ENCODE measurements at regions of chr3 and their contacts with region 1.

Region 1: DNA sequence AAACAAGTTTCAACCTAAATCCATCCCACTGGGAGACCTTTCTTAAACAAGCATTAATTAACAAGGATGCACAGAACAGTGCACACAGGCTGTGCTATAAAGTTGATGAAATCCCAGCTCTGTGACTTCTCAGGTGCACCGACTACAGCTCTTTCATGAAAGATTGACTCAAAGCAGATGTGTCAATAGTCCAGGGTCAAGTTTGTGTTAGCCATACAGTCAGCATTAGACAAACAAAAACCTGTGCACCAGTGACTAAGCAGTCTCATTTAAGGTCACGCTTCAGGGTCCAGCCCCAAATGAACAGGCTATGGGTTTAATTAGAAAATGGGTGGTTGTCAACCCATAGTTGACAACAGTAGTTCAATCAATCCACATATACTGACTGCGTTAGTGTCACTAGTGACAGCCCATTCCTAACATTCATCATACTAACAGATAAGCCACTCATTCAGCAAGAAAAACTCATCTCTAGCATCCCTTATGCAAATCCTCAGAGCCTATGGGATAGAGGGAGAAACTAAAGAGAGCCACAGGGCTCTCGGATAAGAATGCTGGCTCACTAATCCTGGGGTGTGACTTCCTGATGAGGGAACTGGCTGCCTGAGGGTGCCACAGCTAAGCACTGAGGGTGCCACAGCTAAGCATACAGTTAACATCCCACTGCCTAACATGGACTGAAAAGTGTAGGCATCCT is 84.1 kb downstream of the WNT5A start:
- DNase-seq: peak; percentile 83
- ATAC-seq: peak; percentile 91
- H3K4me3 ChIP-seq: peak overlapping the region; percentile 10; the same call in 1 of the 2 replicates
- H3K27ac ChIP-seq: peak overlapping the region; percentile 65
- H3K4me1 ChIP-seq: peaks cover 40% of the 10 kb centered on the region
- H3K27me3 ChIP-seq: no peaks in the 10 kb centered on the region
- CTCF ChIP-seq: no peak

Region 2: DNA sequence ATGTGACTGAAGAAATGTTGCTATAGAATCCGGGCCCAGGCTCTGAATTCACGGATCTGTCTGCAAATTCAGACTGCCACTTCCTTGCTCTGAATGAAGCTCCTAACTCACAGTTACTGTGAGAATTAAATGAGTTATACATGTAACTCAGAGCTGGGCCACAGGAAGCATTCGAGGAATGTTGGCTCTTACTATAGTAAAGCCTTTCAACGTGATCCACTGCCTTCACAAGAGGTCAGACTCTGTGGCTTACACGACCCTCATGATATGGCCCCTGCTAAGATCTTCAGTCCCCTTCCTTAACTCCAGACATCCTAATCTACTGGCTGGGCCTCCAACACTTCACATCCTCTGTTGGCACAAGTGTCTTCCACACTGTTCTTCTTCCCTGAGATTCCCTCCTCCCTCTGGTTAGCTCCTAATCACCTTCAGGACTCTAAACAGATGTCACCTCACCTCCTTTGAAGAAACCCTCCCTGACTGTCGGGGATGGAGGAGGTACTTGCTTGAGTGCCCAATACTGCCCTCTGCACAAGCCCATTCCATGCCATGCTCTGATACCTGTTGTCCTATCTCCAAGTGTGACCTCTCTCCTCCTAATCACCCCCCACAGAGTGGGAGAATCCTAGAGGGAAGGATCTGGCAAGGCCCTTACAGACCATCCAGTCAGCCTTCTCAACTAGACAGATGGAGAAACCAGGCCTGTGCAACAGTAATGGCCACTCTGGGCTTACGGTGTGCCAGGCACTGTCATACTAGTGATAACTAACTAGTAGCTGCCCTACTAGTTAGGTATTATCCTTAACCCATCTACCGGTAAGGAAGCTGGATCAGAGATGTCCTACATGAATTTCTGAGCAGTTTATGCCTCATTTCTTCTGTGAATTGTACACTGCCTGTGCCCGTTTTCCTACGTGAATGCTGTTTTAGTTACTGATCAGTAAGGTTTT is 1522.4 kb before region 1 on chr3:
- CTCF ChIA-PET with region 1: no interaction called
- POLR2A ChIA-PET with region 1: no interaction called
- intact Hi-C with region 1: no loop called
- DNase-seq: no peak
- ATAC-seq: peak; percentile 12
- H3K4me3 ChIP-seq: peak overlapping the region; percentile 82
- H3K27ac ChIP-seq: no peak overlapping the region
- H3K4me1 ChIP-seq: peaks cover 14% of the 10 kb centered on the region; the same call in 1 of the 2 replicates
- H3K27me3 ChIP-seq: no peaks in the 10 kb centered on the region
- CTCF ChIP-seq: no peak

Region 3: GRCh38 chr3:55453886-55454496 is 51.0 kb after region 1 on chr3:
- CTCF ChIA-PET with region 1: no interaction called
- POLR2A ChIA-PET with region 1: no interaction called
- intact Hi-C with region 1: loop called (anchors 1 kb)
- DNase-seq: no peak
- ATAC-seq: no peak
- H3K4me3 ChIP-seq: no peak overlapping the region
- H3K27ac ChIP-seq: no peak overlapping the region
- H3K4me1 ChIP-seq: peaks cover 7% of the 10 kb centered on the region; the same call in 1 of the 2 replicates
- H3K27me3 ChIP-seq: no peaks in the 10 kb centered on the region
- CTCF ChIP-seq: no peak

Region 4: DNA sequence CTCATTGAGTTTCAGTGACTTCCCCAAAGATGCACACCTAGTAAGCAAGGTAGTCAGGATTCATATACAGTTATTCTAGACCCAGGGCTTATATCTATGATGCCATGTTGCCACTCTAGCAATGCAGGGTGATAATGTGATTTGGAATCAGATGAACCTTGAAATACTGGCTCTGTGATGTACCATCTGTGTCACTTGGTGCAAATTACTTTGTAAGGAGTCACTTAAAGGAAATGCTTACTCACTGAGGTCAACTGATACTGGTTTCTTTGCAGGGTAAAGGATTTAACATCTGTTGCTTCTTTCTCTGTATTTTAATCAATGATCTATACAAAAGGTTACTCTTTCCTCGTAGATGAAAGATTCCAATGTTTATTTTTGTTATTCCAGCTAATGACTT is 1878.7 kb after region 1 on chr3:
- CTCF ChIA-PET with region 1: no interaction called
- POLR2A ChIA-PET with region 1: no interaction called
- intact Hi-C with region 1: no loop called
- DNase-seq: peak; percentile 43
- ATAC-seq: peak; percentile 50
- H3K4me3 ChIP-seq: no peak overlapping the region
- H3K27ac ChIP-seq: no peak overlapping the region
- H3K4me1 ChIP-seq: peaks cover 8% of the 10 kb centered on the region
- H3K27me3 ChIP-seq: no peaks in the 10 kb centered on the region
- CTCF ChIP-seq: no peak

Measured in PC-3 (cell line).